ENCODE measurements at regions of chr16 and their contacts with region 1.

Region 1: DNA sequence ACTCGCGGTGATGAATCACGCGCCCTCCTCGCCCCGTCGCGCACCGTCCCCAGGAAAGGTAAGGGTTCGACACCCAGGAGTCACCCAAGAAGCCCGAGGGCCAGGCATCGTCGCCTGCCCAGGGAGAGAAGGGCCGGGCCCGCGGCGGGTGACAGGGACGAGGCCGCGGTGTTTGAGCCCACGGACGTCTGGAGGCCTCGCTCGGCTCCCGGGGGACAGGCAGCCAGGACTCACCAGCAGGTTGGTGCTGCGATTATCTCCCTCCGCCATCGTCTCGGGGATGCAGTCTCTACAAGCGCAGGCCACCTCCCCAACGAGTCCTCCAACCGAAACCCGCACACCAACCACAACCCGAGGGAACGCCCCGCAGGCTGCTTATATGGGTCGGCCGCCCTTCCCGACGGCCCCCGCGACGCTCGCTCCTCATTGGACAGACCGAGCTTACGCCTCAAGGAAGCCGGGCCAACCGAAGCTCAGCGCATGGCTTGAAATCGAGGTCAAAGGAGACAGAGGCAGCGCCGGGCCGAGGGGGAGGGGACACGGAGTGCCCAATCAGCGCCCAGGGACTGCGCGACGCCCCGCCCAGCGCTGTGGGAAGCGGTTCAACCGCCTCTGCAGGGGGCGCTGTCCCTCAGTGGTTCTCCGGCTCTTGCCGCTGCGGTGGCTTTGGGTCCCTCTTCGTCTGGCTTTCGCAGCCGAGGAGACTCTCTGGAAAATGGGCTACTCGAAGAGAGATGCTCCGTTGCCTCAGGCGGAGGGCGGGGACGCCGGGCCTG is at the start of gene ARL6IP1:
- DNase-seq: peak; percentile 99
- H3K4me3 Mint-ChIP-seq: peak within 1 kb of the TSS; percentile 87
- H3K27ac Mint-ChIP-seq: peak within 1 kb of the TSS; percentile 98
- H3K4me1 Mint-ChIP-seq: peaks cover 51% of the 10 kb centered on the region
- H3K27me3 Mint-ChIP-seq: no peaks in the 10 kb centered on the region
- total RNA-seq, gene ARL6IP1: 114 to 123 TPM

Region 2: DNA sequence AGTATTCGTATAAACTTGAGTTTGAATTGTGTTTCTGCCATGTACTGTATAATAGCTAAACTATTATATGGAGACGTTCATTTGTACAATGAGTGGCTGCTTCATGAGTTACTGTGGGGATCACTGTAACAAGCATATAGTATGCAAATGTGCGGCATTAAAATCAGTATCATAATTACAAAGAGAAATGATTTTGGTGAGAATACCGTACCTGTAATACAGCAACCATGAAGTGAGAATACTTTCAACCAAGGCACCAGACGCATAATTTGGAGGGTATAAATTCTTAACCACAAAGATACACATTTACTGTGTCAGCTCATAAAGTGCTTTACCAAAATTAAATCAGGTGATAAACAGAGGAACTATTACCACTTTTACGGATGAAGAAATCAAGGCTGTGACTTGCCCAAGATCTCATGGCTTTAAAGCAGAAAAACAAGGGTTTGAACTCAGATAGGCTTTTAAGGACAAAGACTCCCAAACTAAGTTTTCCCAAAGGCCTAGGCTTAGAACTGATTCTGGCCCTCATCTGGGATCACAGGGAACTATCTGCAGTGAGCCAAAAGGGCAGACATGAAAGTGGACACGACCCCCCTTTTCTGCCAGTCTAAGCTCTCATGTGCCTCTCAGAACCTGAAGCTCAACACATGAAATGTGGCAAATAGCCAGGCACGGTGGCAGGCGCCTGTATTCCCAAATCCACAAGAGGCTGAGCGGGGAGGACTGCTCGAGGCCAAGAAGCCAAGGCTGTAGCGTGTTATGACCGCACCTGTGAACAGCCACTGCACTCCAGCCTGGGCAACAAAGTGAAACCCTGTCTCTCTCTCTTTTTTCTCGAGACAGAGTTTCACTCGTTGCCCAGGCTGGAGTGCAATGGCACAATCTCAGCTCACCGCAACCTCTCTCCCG is 17.7 kb before region 1 on chr16:
- CTCF ChIA-PET with region 1: interaction called, 19 read pairs
- intact Hi-C with region 1: no loop called
- DNase-seq: no peak
- H3K4me3 Mint-ChIP-seq: no peak overlapping the region
- H3K27ac Mint-ChIP-seq: peak overlapping the region; percentile 18
- H3K4me1 Mint-ChIP-seq: peaks cover 55% of the 10 kb centered on the region
- H3K27me3 Mint-ChIP-seq: no peaks in the 10 kb centered on the region

Region 3: DNA sequence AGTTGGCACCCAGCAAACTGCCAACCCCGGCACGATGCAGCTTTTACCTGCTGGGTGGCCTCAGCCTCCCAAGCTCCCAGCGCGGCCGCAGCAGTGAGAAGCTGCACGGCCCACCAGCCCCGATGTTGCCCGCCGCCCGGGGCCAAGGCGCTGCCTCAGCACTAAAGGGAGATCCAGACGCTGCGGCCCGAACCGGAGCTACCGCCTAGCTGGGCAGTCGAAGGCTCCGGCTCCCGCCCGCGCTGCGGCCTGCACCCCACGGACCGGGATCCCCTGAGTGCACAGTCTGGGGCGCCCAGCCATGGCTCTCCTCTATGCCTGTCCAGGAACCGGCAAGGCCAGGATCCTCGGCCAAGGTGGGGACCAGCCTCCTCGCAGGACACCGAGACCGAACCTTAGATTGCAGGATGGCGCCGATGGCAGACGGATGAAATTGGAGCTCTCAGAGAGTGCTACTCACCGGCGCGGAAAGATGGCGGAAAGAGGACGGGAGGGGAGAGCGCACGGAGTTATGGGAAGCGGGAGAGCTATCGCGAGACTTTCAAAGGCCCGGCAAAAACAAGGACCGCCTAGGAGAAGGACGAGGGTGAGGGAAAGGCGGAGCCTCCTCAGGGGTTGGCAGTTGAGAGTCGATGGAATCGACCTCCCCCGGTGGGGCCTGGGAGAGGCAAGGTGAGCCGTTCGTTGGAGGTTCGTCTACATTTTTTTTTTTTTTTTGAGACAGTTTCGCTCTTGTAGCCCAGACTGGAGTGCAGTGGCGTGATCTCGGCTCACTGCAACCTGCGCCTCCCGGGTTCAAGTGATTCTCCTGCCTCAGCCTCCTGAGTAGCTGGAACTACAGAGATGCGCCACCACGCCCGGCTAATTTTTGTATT is 11.3 kb before region 1 on chr16 and contains the start of gene RPS15A:
- CTCF ChIA-PET with region 1: interaction called, 19 read pairs
- intact Hi-C with region 1: loop called (anchors 1 kb)
- DNase-seq: peak; percentile 96
- H3K4me3 Mint-ChIP-seq: peak within 1 kb of the TSS; percentile 94
- H3K27ac Mint-ChIP-seq: peak within 1 kb of the TSS; percentile 96
- H3K4me1 Mint-ChIP-seq: peaks cover 45% of the 10 kb centered on the region
- H3K27me3 Mint-ChIP-seq: no peaks in the 10 kb centered on the region
- total RNA-seq, gene RPS15A: 2,432 to 2,476 TPM

Region 4: DNA sequence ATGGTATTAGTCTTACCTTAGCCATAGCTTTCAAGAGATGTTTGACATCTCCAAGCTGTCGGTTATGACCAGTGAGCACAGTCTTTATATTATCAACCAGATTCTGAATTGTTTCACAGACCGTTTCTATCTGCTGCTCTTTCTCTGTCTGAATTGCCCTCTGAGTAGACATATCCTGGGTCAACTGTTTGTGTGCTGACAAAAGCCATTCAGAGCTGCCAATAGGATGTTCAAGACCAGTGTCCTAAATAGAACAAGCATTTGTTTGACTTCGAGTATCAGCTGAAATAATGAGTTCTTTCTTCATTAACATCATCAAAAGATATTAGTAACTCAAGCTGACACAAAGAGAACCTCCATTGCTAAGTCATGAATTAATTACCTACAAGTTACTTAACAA is 14.9 kb after region 1 on chr16:
- CTCF ChIA-PET with region 1: interaction called, 11 read pairs
- intact Hi-C with region 1: no loop called
- DNase-seq: no peak
- H3K4me3 Mint-ChIP-seq: no peak overlapping the region
- H3K27ac Mint-ChIP-seq: no peak overlapping the region
- H3K4me1 Mint-ChIP-seq: peaks cover 12% of the 10 kb centered on the region
- H3K27me3 Mint-ChIP-seq: no peaks in the 10 kb centered on the region

Region 5: GRCh38 chr16:18834864-18835263 is 33.5 kb after region 1 on chr16:
- CTCF ChIA-PET with region 1: interaction called, 19 read pairs
- intact Hi-C with region 1: no loop called
- DNase-seq: no peak
- H3K4me3 Mint-ChIP-seq: no peak overlapping the region
- H3K27ac Mint-ChIP-seq: no peak overlapping the region
- H3K4me1 Mint-ChIP-seq: peaks cover 13% of the 10 kb centered on the region
- H3K27me3 Mint-ChIP-seq: no peaks in the 10 kb centered on the region

Region 6: DNA sequence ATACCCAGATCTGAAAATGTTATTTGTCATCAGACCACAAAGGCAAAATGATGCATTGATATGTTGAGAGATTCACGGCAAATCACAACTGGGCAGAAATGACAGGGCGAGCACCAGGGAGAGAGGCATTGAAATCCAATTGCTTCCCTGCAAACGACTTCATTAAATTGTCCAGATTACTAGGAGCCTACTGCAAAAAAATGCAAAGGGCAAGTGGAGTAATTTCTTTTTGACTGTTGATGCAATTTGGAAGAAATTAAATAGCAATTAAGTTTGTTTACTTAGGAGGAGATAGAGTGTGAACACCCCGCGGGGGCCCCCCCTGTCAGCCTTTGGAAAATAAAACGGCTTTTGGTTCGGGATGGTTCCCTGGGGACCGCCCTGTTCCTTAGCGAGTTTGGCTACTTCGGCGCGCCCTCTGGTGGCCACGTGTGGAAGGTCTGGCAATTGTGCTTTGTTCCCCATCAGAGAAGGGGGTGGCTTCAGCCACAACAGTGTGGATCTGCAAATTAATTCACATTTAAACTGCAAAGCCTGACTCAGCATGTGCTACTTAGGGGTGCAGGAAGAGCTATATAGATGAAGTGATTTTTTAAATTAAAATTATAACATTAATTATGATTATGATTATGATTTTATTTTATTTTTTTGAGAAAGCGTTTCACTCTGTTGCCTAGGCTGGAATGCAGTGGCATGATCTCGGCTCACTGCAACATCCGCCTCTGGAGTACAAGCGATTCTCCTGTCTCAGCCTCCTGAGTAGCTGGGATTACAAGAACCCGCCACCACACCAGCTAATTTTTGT is 167.9 kb after region 1 on chr16:
- CTCF ChIA-PET with region 1: interaction called, 8 read pairs
- intact Hi-C with region 1: loop called (anchors 1 kb)
- DNase-seq: peak; percentile 89
- H3K4me3 Mint-ChIP-seq: peak overlapping the region; percentile 23
- H3K27ac Mint-ChIP-seq: no peak overlapping the region
- H3K4me1 Mint-ChIP-seq: peaks cover 6% of the 10 kb centered on the region
- H3K27me3 Mint-ChIP-seq: no peaks in the 10 kb centered on the region

Measured in activated naive CD4-positive, alpha-beta T cell treated with anti-CD3 and anti-CD28 coated beads for 36 hours (primary cell).